Activated CD4-positive, alpha-beta memory T cell treated with anti-CD3 and anti-CD28 coated beads, Interleukin-2, amount 10 ng/mL, durations not matched to agents 7 days and 5 days (primary cell): ENCODE measurements at regions of chr17 and their contacts with region 1.

Region 1: DNA sequence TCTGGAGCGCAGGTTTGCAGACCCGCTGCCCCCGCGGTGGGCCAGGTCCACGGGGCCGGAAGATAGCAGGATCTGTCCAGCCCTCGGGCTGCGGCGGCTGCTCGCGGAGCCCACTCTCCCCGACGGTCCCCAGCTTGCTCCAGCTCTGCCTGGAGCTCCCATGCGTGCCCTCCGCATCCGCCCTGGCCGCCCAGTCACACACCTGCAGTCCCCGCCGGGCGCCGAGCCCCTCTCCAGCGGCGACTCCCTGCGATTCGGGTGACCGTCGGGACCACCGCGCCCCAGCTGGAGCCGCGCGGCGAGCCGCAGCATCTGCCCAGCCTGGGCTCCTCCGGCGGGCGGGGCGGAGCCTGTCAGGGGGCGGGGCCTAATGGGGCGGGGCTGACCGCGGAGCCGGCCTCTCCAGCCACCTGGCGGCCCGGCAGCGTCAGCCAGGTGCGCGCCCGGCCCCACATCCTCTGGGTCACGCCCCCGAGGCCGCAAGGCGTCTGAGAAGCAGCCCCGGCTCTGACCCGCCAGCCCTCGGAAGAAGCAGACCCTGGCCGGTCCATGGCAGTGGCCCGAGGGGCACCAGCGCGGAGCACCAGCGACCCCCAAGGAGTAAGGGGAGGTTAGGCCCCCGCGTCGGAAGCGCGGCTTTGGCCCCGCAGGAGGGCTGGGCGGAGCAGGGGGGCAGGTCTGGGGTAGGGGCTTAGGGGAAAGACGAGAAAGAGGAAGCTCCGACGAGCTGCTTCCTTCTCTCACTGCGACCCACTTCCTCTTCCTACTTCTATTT is at the start of gene PIK3R5:
- DNase-seq: peak; percentile 81
- H3K4me3 Mint-ChIP-seq: peak within 1 kb of the TSS; percentile 100
- H3K27ac Mint-ChIP-seq: peak within 1 kb of the TSS; percentile 99
- H3K4me1 Mint-ChIP-seq: peaks cover 56% of the 10 kb centered on the region
- H3K27me3 Mint-ChIP-seq: no peaks in the 10 kb centered on the region
- total RNA-seq, gene PIK3R5: 50.3 to 52.7 TPM

Region 2: DNA sequence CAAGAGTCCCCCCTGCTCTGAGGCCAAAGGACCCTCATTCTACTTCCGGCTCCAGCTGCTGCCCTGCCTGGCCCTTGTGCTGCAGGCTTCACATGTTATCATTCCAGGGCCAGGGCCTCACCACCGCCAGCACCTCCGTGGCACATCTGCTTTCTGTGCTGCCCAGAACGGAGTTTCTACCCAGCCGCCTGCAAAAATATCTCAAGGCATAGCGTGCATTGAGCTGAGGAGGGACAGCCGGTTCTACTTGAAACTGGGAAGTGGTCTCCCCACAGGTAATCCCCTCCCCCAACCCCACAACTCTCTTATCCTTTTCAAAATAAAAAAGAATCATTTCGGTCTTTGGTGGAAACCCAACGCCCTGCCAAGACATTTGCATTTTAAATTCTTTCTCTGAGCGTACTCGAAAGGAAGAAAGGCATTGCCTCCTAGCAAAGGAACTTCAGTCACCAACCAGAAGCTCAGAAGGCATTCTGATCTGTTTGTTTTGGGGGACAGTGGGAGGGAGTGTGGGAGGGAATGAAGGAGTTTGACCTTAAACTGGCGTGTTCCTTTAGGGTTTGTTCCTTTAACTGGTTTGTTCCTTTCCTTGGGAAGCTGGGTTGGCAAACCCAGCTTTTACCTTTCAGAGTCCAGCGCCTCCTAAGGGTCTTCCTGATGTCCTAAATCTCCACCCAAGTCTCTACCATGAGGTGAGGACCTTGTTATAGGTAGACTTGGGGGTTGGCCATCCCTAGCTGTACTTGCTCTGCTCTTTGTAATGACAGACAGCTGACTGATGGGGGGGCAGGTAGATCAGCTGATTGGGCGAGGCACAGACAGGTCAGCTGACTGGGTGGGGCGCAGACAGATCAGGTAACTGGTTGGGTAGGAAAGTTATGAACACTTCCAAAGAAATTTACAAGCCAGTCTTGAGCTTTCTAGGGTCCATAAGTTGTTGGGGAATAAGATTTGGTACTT is 64.7 kb before region 1 on chr17:
- CTCF ChIA-PET with region 1: interaction called, 5 read pairs
- POLR2A ChIA-PET with region 1: interaction called, 17 read pairs
- DNase-seq: no peak
- H3K4me3 Mint-ChIP-seq: no peak overlapping the region
- H3K27ac Mint-ChIP-seq: peak overlapping the region; percentile 77
- H3K4me1 Mint-ChIP-seq: peaks cover 62% of the 10 kb centered on the region
- H3K27me3 Mint-ChIP-seq: no peaks in the 10 kb centered on the region

Region 3: GRCh38 chr17:8941520-8941919 is 24.1 kb before region 1 on chr17:
- CTCF ChIA-PET with region 1: interaction called, 6 read pairs
- POLR2A ChIA-PET with region 1: interaction called, 56 read pairs
- DNase-seq: peak; percentile 82
- H3K4me3 Mint-ChIP-seq: peak overlapping the region; percentile 75
- H3K27ac Mint-ChIP-seq: peak overlapping the region; percentile 99
- H3K4me1 Mint-ChIP-seq: peaks cover 74% of the 10 kb centered on the region
- H3K27me3 Mint-ChIP-seq: no peaks in the 10 kb centered on the region

Region 4: DNA sequence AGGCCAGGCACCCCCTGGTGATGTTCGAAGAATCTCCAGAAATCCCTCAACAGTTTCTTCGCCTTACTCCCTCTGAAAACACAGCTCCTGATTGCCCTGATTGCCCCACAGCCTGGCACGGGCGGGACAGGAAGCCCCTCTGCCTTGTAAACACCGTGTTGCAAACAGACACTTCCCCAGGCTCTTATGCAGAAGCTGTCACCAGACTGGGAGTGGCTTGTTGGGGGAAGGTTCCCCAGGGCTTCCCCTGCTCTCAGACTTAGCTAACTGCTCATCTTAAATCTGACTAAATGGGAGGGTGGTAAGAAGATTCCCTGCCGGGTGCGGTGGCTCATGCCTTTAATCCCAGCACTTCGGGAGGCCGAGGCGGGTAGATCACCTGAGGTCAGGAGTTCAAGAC is 11.2 kb before region 1 on chr17:
- CTCF ChIA-PET with region 1: interaction called, 7 read pairs
- POLR2A ChIA-PET with region 1: interaction called, 40 read pairs
- DNase-seq: peak; percentile 78
- H3K4me3 Mint-ChIP-seq: peak overlapping the region; percentile 36
- H3K27ac Mint-ChIP-seq: peak overlapping the region; percentile 73
- H3K4me1 Mint-ChIP-seq: peaks cover 97% of the 10 kb centered on the region
- H3K27me3 Mint-ChIP-seq: no peaks in the 10 kb centered on the region

Region 5: DNA sequence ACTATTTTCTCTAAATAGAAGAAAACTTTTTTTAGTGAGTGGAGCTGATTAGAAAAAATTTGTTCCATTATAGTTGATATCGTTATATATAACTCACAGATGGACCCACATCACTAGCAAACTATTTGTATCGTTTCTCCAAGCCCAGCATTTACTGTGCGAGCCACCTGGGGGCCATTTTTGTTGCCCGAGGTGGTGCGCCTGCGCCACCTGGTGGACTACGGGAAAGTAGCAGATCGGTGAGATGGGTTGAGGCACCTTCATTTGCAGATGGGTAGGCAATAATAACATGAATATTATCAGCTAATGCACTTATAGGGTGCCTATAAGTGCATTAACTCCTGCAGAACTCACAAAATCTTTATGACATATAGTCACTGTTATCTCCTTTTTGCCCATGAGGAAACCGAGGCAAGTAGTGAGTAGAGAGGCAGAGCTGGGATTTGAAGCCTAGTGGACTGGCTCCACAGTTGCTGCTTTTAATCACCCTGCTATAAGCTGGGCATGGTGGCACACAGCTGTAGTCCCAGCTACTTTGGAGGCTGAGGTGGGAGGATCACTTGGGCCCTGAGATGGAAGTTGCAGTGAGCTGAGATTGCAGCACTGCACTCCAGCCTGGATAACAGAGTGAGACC is 32.5 kb after region 1 on chr17:
- CTCF ChIA-PET with region 1: interaction called, 15 read pairs
- POLR2A ChIA-PET with region 1: no interaction called
- DNase-seq: peak; percentile 81
- H3K4me3 Mint-ChIP-seq: no peak overlapping the region
- H3K27ac Mint-ChIP-seq: no peak overlapping the region
- H3K4me1 Mint-ChIP-seq: peaks cover 12% of the 10 kb centered on the region
- H3K27me3 Mint-ChIP-seq: peaks cover 34% of the 10 kb centered on the region